Heart right ventricle (tissue), 16 donors: ENCODE measurements at regions of chr12 and their contacts with region 1.

Region 1: GRCh38 chr12:76470028-76470939 is 89.3 kb downstream of the OSBPL8 start:
- DNase-seq: peak in 1 of 2 donors; percentile 49
- ATAC-seq: peak; percentile 90 to 99 (median 96)
- H3K4me3 ChIP-seq: no peak overlapping the region
- H3K27ac ChIP-seq: peak overlapping the region; percentile 24 to 83 (median 78)
- H3K4me1 ChIP-seq: peaks cover 4 to 53% (median 31%) of the 10 kb centered on the region in 9 donors
- H3K27me3 ChIP-seq: no peaks in the 10 kb centered on the region
- CTCF ChIP-seq: no peak

Region 2: DNA sequence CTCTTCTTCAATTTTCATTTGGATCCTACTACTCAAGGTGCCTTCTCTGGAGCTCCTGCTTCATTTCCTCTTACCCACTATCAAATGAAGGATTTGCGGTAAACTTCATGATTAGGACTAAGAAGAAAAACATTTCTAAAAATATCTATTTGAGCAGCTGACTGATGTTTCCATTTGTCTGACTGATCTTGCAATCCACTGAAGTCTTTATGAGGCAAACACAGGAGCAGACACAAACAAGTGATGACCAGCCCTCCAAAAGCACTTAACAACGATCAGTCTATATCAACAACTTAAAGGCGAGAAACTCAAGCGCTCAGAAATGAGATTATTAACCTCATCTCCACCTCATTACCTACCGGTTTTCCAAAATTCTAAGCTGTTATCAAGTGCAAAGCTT is 63.0 kb after region 1 on chr12:
- intact Hi-C with region 1: loop called in 1 of 10 experiments (anchors 2 kb)
- DNase-seq: no peak
- ATAC-seq: peak in 5 of 8 donors; percentile 44 to 85 (median 54)
- H3K4me3 ChIP-seq: peak overlapping the region in 1 of 10 donors; percentile 16
- H3K27ac ChIP-seq: peak overlapping the region in 2 of 10 donors; percentile 14 to 42
- H3K4me1 ChIP-seq: peaks cover 0 to 38% (median 6%) of the 10 kb centered on the region in 9 donors
- H3K27me3 ChIP-seq: no peaks in the 10 kb centered on the region
- CTCF ChIP-seq: no peak